SK-N-SH (cell line): ENCODE measurements at regions of chr16 and their contacts with region 1.

Region 1: GRCh38 chr16:83447560-83447959 is 360.2 kb upstream of the HSBP1 start:
- DNase-seq: no peak
- H3K4me3 ChIP-seq: no peak overlapping the region
- H3K27ac ChIP-seq: no peak overlapping the region
- H3K4me1 ChIP-seq: no peaks in the 10 kb centered on the region
- H3K27me3 ChIP-seq: no peaks in the 10 kb centered on the region
- CTCF ChIP-seq: no peak
- EP300 ChIP-seq: no peak
- RAD21 ChIP-seq: no peak

Region 2: GRCh38 chr16:83031524-83031923 is 416.0 kb before region 1 on chr16:
- CTCF ChIA-PET with region 1: no interaction called
- POLR2A ChIA-PET with region 1: no interaction called
- DNase-seq: no peak
- H3K4me3 ChIP-seq: no peak overlapping the region
- H3K27ac ChIP-seq: no peak overlapping the region
- H3K4me1 ChIP-seq: no peaks in the 10 kb centered on the region
- H3K27me3 ChIP-seq: no peaks in the 10 kb centered on the region
- CTCF ChIP-seq: no peak
- EP300 ChIP-seq: no peak
- RAD21 ChIP-seq: no peak

Region 3: GRCh38 chr16:83336630-83337029 is 110.9 kb before region 1 on chr16:
- CTCF ChIA-PET with region 1: no interaction called
- POLR2A ChIA-PET with region 1: no interaction called
- DNase-seq: no peak
- H3K4me3 ChIP-seq: no peak overlapping the region
- H3K27ac ChIP-seq: peak overlapping the region; percentile 67 to 86; a peak in 3 of 4 replicates
- H3K4me1 ChIP-seq: peaks cover 5 to 7% of the 10 kb centered on the region in 2 experiments; a peak in 3 of 4 replicates
- H3K27me3 ChIP-seq: no peaks in the 10 kb centered on the region
- CTCF ChIP-seq: no peak
- EP300 ChIP-seq: peak; percentile 26 to 79; a peak in 2 of 4 replicates
- RAD21 ChIP-seq: no peak

Region 4: GRCh38 chr16:83458612-83459011 is 11.1 kb after region 1 on chr16:
- CTCF ChIA-PET with region 1: interaction called, 10 read pairs
- POLR2A ChIA-PET with region 1: interaction called, 3 read pairs
- DNase-seq: no peak
- H3K4me3 ChIP-seq: no peak overlapping the region
- H3K27ac ChIP-seq: peak overlapping the region in 1 of 2 experiments; percentile 69; a peak in 2 of 4 replicates
- H3K4me1 ChIP-seq: peaks cover 0 to 8% of the 10 kb centered on the region in 2 experiments; a peak in 1 of 4 replicates
- H3K27me3 ChIP-seq: no peaks in the 10 kb centered on the region
- CTCF ChIP-seq: no peak
- EP300 ChIP-seq: no peak
- RAD21 ChIP-seq: no peak